ENCODE measurements at regions of chr11 and their contacts with region 1.

Region 1: DNA sequence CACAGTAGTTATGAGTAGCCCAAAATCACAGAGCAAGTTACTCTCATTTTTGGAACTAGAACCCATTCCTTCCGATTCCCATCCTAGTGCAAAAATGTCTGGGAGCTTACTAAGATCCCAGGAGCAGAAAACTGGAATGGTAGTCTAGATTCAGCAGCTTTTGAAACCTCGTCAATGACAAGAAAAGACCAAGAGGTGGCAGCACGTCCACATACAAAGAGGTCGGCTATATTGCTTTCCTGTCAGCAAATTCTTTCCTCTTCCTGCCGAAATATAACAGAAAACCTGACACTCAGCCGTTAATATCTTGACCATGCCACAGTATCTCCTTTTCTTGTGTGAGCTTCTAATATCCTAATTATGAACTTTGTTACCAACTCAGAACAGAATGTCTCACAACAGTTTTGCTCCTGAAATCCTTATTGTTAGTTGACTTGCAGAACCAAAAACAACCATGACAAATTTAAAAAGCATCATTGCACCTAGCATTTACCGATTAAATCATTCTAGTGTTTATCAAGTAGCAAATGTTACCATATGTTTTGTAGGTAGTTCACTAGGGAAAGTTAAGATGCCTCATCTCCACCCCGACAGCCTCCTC is 92.8 kb upstream of the OR9G4 start:
- DNase-seq: no peak
- ATAC-seq: peak; percentile 60

Region 2: GRCh38 chr11:56808326-56808725 is 33.0 kb before region 1 on chr11:
- intact Hi-C with region 1: no loop called
- DNase-seq: no peak
- ATAC-seq: no peak

Region 3: GRCh38 chr11:57116654-57117053 is 275.3 kb after region 1 on chr11:
- intact Hi-C with region 1: loop called (anchors 10 kb)
- DNase-seq: peak; percentile 44
- ATAC-seq: peak; percentile 48

Measured in Right ventricle myocardium superior (tissue), 1 donor.